Motor neuron (in vitro differentiated cells): ENCODE measurements at regions of chr11 and their contacts with region 1.

Region 1: GRCh38 chr11:113289431-113290187 is 24.8 kb upstream of the TTC12 start:
- ATAC-seq: peak; percentile 90 to 97 (median 93)
- H3K4me3 ChIP-seq: no peak overlapping the region
- H3K27ac ChIP-seq: no peak overlapping the region
- H3K4me1 ChIP-seq: peaks cover 6 to 7% of the 10 kb centered on the region in 2 donors

Region 2: GRCh38 chr11:112219476-112220232 is 1070.0 kb before region 1 on chr11:
- in situ Hi-C with region 1: loop called in 2 of 9 experiments (anchors 25 kb)
- ATAC-seq: peak; percentile 96 to 100 (median 99)
- H3K4me3 ChIP-seq: no peak overlapping the region
- H3K27ac ChIP-seq: no peak overlapping the region
- H3K4me1 ChIP-seq: no peaks in the 10 kb centered on the region

Region 3: DNA sequence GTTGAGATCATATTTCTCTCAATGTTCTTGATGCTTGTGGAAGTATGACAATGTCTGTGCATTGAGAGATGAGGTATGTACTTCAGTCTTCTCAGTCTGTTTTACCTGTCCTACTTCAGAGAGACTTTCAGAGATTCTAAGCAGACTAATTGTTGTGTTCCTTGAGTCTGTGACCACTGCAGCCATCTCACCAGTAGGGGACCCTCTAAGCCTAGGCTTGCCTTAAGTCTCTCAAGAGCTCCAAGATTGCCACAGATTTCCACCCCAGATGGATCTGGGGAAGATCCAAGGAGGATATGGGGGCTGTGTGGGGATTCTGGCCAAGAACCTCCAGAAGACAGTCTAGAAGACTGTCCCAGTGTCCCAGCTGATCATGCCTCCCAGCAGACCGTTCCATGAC is 849.1 kb before region 1 on chr11:
- in situ Hi-C with region 1: loop called in 1 of 9 experiments (anchors 25 kb)
- ATAC-seq: peak in 3 of 8 experiments; percentile 46 to 59 (median 55)
- H3K4me3 ChIP-seq: no peak overlapping the region
- H3K27ac ChIP-seq: no peak overlapping the region
- H3K4me1 ChIP-seq: no peaks in the 10 kb centered on the region

Region 4: DNA sequence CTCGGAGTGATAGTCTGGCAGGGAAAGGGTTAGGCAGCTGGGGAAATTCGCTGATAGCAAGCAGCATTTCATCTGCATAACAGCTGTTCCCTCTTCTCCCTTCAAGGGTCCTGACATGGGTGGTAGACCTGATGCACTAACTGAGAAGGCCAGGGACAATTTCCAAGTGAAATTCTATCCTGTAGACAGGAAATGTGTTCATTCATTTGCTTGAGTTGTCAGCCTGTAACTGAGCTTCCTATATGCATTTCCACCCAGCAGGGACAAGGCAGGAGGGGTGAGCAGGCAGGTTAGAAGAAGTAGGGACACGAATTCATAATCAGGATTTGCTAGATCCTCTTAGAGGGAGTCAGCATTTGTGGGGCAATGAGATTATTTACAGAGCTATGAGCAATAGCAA is 482.7 kb before region 1 on chr11:
- in situ Hi-C with region 1: loop called in 2 of 9 experiments (anchors 10 to 25 kb)
- ATAC-seq: peak; percentile 22 to 80 (median 69)
- H3K4me3 ChIP-seq: no peak overlapping the region
- H3K27ac ChIP-seq: peak overlapping the region; percentile 1 to 24
- H3K4me1 ChIP-seq: peaks cover 34 to 41% of the 10 kb centered on the region in 2 donors

Region 5: DNA sequence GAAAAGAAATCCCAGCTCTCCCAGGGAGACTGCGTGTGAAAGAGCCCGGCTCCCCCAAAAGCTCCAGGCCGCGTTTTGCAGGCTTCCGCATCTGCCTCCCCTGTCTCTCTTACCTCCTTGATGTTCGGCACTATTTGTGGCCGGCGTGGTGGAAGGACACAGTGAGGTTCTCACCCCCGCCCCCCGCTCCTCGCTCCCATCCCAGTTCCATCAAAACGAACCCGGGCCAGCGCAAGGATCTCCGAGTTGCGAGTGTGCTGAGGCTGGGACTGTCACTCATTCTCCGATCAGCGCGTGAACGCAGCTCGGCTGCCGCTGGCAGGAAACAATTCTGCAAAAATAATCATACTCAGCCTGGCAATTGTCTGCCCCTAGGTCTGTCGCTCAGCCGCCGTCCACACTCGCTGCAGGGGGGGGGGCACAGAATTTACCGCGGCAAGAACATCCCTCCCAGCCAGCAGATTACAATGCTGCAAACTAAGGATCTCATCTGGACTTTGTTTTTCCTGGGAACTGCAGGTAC is 328.4 kb before region 1 on chr11 and contains the start of gene NCAM1:
- in situ Hi-C with region 1: loop called in 2 of 9 experiments (anchors 25 kb)
- ATAC-seq: peak; percentile 57 to 74 (median 61)
- H3K4me3 ChIP-seq: peak within 1 kb of the TSS; percentile 57 to 79 (median 67)
- H3K27ac ChIP-seq: peak within 1 kb of the TSS; percentile 67 to 85
- H3K4me1 ChIP-seq: peaks cover 14 to 18% of the 10 kb centered on the region in 2 donors
- total RNA-seq, gene NCAM1: 33.9 to 382 (median 290) TPM